ENCODE measurements at regions of chr15 and their contacts with region 1.

Region 1: GRCh38 chr15:75661091-75661777 is 13.5 kb downstream of the SNX33 start:
- DNase-seq: no peak
- ATAC-seq: peak; percentile 9; the same call in 2 of the 3 replicates
- H3K4me3 ChIP-seq: no peak overlapping the region
- H3K27ac ChIP-seq: no peak overlapping the region
- H3K4me1 ChIP-seq: peaks cover 0 to 23% of the 10 kb centered on the region in 2 experiments; a peak in 2 of 5 replicates
- H3K27me3 ChIP-seq: no peaks in the 10 kb centered on the region
- CTCF ChIP-seq: no peak
- EP300 ChIP-seq: no peak
- POLR2A ChIP-seq: no peak
- RAD21 ChIP-seq: no peak

Region 2: GRCh38 chr15:75672646-75673425 is 11.6 kb after region 1 on chr15:
- CTCF ChIA-PET with region 1: no interaction called
- POLR2A ChIA-PET with region 1: interaction called, 10 read pairs
- in situ Hi-C with region 1: no loop called
- intact Hi-C with region 1: no loop called
- DNase-seq: no peak
- ATAC-seq: peak; percentile 24
- H3K4me3 ChIP-seq: no peak overlapping the region
- H3K27ac ChIP-seq: no peak overlapping the region
- H3K4me1 ChIP-seq: peaks cover 10 to 57% of the 10 kb centered on the region in 2 experiments; a peak in 4 of 5 replicates
- H3K27me3 ChIP-seq: no peaks in the 10 kb centered on the region
- CTCF ChIP-seq: no peak
- EP300 ChIP-seq: no peak
- POLR2A ChIP-seq: no peak
- RAD21 ChIP-seq: no peak

Measured in K562 (cell line).